Activated T-helper 2 cell treated with anti-CD3 and anti-CD28 coated beads, Interferon-gamma antibody, Interleukin-2, Interleukin-4, amounts not matched to agents 10 μg/mL and 5 μg/mL and 100 μg/mL, durations not matched to agents 14 hours and 24 hours and 36 hours (primary cell): ENCODE measurements at regions of chr15 and their contacts with region 1.

Region 1: DNA sequence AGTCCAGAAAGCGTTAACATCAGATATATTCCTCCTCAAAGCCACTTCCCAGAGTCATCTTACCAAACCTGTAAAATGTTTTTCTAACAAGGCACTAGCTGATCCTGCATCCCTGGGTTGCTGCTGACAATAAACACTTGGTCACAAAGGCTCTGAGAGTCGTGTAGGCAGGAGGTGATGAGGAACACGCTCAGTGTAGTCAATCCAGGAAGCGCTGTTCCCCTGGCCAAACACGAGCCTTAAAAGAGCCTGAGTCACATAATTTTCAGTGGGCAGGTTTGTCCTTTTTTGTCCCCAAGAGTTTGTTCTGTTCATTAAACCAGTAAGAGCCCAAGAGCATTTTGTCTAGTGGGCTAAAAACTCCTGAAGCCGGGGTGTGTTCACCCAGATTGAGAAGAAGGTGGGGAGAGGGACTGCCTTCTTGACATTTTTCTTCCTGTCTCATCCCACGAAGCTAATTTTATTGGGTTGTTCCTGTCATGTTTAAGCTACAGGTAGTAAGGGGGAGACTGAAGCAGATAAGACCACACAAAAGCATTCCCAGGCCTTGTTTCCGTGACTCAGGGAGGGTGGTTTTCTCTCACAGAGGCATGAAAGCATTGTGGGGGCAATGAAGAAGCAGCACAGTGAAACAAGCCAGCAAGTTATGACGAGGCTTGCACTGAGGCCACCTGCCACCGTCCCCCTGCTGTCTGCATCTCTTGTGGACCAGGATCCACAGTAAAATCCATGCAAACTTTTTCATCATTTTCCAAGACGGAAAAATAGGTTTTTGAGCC is 73.7 kb downstream of the FOXB1 start:
- DNase-seq: no peak
- H3K4me3 Mint-ChIP-seq: peak overlapping the region; percentile 6
- H3K27ac Mint-ChIP-seq: peak overlapping the region; percentile 93
- H3K4me1 Mint-ChIP-seq: peaks cover 53% of the 10 kb centered on the region
- H3K27me3 Mint-ChIP-seq: no peaks in the 10 kb centered on the region

Region 2: GRCh38 chr15:60006203-60006862 is 71.4 kb before region 1 on chr15:
- intact Hi-C with region 1: loop called (anchors 1 kb)
- DNase-seq: peak; percentile 84
- H3K4me3 Mint-ChIP-seq: peak overlapping the region; percentile 95
- H3K27ac Mint-ChIP-seq: peak overlapping the region; percentile 94
- H3K4me1 Mint-ChIP-seq: peaks cover 47% of the 10 kb centered on the region
- H3K27me3 Mint-ChIP-seq: peaks cover 65% of the 10 kb centered on the region

Region 3: GRCh38 chr15:60017538-60018520 is 59.9 kb before region 1 on chr15:
- intact Hi-C with region 1: loop called (anchors 1 kb)
- DNase-seq: no peak
- H3K4me3 Mint-ChIP-seq: no peak overlapping the region
- H3K27ac Mint-ChIP-seq: peak overlapping the region; percentile 68
- H3K4me1 Mint-ChIP-seq: peaks cover 40% of the 10 kb centered on the region
- H3K27me3 Mint-ChIP-seq: peaks cover 14% of the 10 kb centered on the region

Region 4: GRCh38 chr15:60044636-60045270 is 33.0 kb before region 1 on chr15:
- intact Hi-C with region 1: loop called (anchors 1 kb)
- DNase-seq: peak; percentile 33
- H3K4me3 Mint-ChIP-seq: peak overlapping the region; percentile 13
- H3K27ac Mint-ChIP-seq: peak overlapping the region; percentile 77
- H3K4me1 Mint-ChIP-seq: peaks cover 24% of the 10 kb centered on the region
- H3K27me3 Mint-ChIP-seq: no peaks in the 10 kb centered on the region

Region 5: DNA sequence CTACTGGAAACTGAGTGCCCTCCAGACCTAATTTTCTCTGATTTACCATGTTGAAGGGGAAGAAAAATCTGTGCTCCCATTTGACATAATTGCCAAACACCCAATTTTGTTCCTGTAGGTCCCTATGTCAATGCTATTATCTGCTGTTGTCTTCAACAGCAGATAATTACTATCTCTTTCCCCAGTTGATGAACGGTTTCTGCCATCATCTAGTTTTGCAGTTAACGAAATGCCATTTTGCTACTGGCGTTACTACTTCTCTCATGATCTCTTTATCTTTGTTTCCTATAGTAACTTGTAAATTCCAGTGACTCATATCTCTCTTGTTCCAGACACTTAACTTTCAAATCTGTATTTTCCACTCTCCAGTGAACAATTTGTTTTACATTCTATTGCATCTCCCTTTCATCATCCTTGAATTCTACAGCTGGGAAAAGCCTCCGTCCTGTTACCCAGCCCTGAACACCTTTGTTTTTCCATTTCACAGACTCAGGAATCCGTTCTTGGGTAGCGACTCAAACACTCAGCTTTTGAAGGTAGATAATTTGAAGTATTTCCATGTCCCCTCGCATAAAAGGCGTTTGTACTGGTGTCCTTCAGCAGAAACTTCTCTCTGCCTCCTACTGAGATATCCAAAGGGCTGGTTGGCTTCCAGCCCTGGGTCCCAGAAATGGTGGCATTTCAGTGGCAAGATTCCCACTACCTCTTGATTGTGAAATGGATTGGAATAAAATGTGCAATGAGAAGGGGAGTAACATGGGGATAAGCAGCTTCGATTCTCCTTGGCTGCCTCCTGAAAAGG is 38.0 kb after region 1 on chr15:
- intact Hi-C with region 1: loop called (anchors 2 kb)
- DNase-seq: no peak
- H3K4me3 Mint-ChIP-seq: no peak overlapping the region
- H3K27ac Mint-ChIP-seq: peak overlapping the region; percentile 83
- H3K4me1 Mint-ChIP-seq: peaks cover 53% of the 10 kb centered on the region
- H3K27me3 Mint-ChIP-seq: no peaks in the 10 kb centered on the region

Region 6: GRCh38 chr15:60128000-60128376 is 50.2 kb after region 1 on chr15:
- intact Hi-C with region 1: loop called (anchors 2 kb)
- DNase-seq: no peak
- H3K4me3 Mint-ChIP-seq: peak overlapping the region; percentile 71
- H3K27ac Mint-ChIP-seq: peak overlapping the region; percentile 86
- H3K4me1 Mint-ChIP-seq: peaks cover 53% of the 10 kb centered on the region
- H3K27me3 Mint-ChIP-seq: peaks cover 9% of the 10 kb centered on the region